ENCODE measurements at regions of chr22 and their contacts with region 1.

Region 1: DNA sequence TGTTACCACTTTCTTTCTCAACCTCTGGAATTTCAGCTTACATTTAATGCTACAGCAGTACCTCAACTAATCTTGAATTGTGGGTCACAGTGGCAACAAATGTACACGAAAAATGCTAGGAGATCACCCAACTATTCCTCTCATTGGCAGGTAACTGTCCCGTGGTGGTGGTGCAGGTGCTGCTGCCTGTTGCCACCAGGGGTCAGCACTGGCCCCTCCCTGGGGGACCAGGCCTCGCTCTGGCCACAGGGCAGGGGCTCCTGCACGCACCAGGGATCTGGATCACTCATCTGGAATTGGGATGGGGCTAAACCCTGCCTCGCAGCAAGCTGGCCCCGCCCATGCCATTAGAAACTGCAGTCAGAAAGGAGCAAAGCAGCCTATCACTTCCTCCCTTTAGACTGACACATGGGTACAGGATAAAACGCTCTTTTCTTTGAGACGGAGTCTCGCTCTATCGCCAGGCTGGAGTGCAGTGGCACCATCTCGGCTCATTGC is 6.9 kb upstream of the POLDIP3 start:
- DNase-seq: peak; percentile 69
- ATAC-seq: peak; percentile 80
- H3K4me3 Mint-ChIP-seq: no peak overlapping the region
- H3K27ac Mint-ChIP-seq: peak overlapping the region; percentile 30
- H3K4me1 Mint-ChIP-seq: peaks cover 33% of the 10 kb centered on the region
- H3K27me3 Mint-ChIP-seq: no peaks in the 10 kb centered on the region
- CTCF ChIP-seq: peak; percentile 46

Region 2: GRCh38 chr22:42635531-42635930 is 14.0 kb after region 1 on chr22:
- CTCF ChIA-PET with region 1: interaction called, 14 read pairs
- POLR2A ChIA-PET with region 1: no interaction called
- intact Hi-C with region 1: no loop called
- DNase-seq: no peak
- ATAC-seq: no peak
- H3K4me3 Mint-ChIP-seq: no peak overlapping the region
- H3K27ac Mint-ChIP-seq: no peak overlapping the region
- H3K4me1 Mint-ChIP-seq: peaks cover 9% of the 10 kb centered on the region
- H3K27me3 Mint-ChIP-seq: no peaks in the 10 kb centered on the region
- CTCF ChIP-seq: no peak

Region 3: GRCh38 chr22:42642806-42643633 is 21.5 kb after region 1 on chr22:
- CTCF ChIA-PET with region 1: interaction called, 14 read pairs
- POLR2A ChIA-PET with region 1: interaction called, 68 read pairs
- intact Hi-C with region 1: no loop called
- DNase-seq: no peak
- ATAC-seq: peak; percentile 84
- H3K4me3 Mint-ChIP-seq: no peak overlapping the region
- H3K27ac Mint-ChIP-seq: peak overlapping the region; percentile 74
- H3K4me1 Mint-ChIP-seq: peaks cover 67% of the 10 kb centered on the region
- H3K27me3 Mint-ChIP-seq: no peaks in the 10 kb centered on the region
- CTCF ChIP-seq: no peak

Region 4: DNA sequence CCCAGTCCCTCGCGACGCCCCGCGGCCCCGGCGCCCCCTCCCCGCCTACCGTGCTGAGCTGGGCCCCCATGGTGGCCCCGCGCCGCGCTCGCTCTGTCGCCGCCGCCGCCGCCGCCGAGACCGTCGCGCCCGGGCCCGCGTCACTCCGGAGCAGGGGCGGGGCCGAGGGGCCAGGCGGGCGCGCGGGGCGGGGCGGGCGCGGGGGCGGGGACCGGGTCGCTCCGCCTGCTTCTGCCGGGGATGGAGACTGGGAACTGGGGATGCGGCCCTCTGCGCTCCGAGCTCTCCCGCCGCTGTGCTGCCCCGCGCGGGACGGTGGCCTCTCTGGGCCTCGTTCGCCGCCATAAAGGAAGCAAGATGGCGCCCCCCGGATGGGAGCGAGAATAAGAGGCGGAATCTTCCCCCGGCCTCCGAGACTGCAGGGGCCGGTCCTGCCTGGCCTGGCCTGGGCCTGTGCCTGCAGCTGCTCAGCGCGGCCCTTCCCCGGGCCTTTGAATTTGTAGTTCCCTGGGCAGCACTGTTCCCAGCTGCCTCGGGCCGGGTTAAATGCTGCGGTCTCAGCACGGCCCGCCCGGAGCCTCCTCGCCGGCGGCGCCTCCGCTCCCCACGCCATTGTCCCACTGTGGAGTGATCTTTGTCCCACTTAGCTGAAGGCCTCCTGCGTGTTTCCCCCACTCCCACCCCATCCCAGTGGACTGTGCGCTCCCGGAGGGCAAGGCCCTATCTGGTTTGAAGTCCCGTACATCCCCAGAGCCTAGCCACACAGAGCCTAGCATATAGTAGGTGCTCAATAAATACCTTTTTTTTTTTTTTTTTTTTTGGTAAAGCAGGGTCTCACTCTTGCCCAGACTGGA is 27.9 kb after region 1 on chr22 and contains the start of gene CYB5R3:
- CTCF ChIA-PET with region 1: interaction called, 17 read pairs
- POLR2A ChIA-PET with region 1: interaction called, 96 read pairs
- intact Hi-C with region 1: no loop called
- DNase-seq: peak; percentile 81
- ATAC-seq: peak; percentile 77
- H3K4me3 Mint-ChIP-seq: peak within 1 kb of the TSS; percentile 92
- H3K27ac Mint-ChIP-seq: peak within 1 kb of the TSS; percentile 91
- H3K4me1 Mint-ChIP-seq: peaks cover 55% of the 10 kb centered on the region
- H3K27me3 Mint-ChIP-seq: no peaks in the 10 kb centered on the region
- CTCF ChIP-seq: no peak
- total RNA-seq, gene CYB5R3: 78.2 and 91.7 TPM in 2 replicates

Region 5: GRCh38 chr22:42655693-42656092 is 34.1 kb after region 1 on chr22:
- CTCF ChIA-PET with region 1: interaction called, 17 read pairs
- POLR2A ChIA-PET with region 1: interaction called, 96 read pairs
- intact Hi-C with region 1: no loop called
- DNase-seq: peak; percentile 54
- ATAC-seq: peak; percentile 93
- H3K4me3 Mint-ChIP-seq: peak overlapping the region; percentile 65
- H3K27ac Mint-ChIP-seq: peak overlapping the region; percentile 81
- H3K4me1 Mint-ChIP-seq: peaks cover 46% of the 10 kb centered on the region
- H3K27me3 Mint-ChIP-seq: no peaks in the 10 kb centered on the region
- CTCF ChIP-seq: no peak

Region 6: DNA sequence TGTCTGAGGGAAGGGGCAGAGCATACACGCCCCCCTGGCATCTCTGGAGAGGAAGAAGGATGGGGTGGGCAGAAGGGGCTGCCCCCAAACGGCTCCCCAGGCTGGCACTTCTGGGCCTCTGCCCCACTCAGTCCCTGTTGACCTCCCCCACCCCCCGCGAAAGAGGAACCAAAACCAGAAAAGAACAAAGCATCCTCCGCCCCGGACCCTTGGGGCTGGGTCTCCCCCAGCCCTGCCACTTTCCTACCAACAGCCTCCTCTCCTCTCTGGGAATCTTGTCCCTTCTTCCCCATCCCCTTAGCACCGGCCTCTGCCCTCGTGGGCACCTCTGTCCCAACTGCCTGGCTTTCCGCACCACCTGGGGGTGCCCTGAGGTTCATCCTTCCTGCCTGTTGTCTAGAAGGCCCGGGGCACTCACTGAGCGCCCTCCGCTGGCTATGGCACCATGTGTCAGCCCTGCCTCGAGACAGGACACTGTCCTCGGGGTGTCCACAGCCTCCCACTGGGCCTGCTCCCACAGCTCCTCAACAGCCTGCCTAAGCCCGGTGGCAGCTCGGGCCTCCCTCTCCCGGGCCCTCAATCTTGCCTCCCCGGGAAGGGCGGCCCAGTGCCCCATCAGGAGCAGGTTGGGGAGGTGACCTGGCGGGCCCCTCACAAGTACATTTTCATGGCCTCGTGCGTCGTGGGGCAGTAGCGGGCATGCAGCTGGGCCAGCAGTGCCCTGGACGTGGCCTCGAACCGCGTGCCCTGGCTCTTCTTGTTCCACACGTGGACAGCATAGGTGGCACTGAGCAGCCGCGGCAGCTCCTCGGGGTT is 70.9 kb after region 1 on chr22:
- CTCF ChIA-PET with region 1: no interaction called
- POLR2A ChIA-PET with region 1: no interaction called
- intact Hi-C with region 1: loop called (anchors 1 kb)
- DNase-seq: peak; percentile 45
- ATAC-seq: peak; percentile 87
- H3K4me3 Mint-ChIP-seq: peak overlapping the region; percentile 68
- H3K27ac Mint-ChIP-seq: peak overlapping the region; percentile 88
- H3K4me1 Mint-ChIP-seq: peaks cover 42% of the 10 kb centered on the region
- H3K27me3 Mint-ChIP-seq: no peaks in the 10 kb centered on the region
- CTCF ChIP-seq: no peak

Region 7: GRCh38 chr22:42768385-42769019 is 146.9 kb after region 1 on chr22:
- CTCF ChIA-PET with region 1: no interaction called
- POLR2A ChIA-PET with region 1: no interaction called
- intact Hi-C with region 1: no loop called
- DNase-seq: no peak
- ATAC-seq: no peak
- H3K4me3 Mint-ChIP-seq: no peak overlapping the region
- H3K27ac Mint-ChIP-seq: no peak overlapping the region
- H3K4me1 Mint-ChIP-seq: peaks cover 64% of the 10 kb centered on the region
- H3K27me3 Mint-ChIP-seq: no peaks in the 10 kb centered on the region
- CTCF ChIP-seq: no peak

Region 8: DNA sequence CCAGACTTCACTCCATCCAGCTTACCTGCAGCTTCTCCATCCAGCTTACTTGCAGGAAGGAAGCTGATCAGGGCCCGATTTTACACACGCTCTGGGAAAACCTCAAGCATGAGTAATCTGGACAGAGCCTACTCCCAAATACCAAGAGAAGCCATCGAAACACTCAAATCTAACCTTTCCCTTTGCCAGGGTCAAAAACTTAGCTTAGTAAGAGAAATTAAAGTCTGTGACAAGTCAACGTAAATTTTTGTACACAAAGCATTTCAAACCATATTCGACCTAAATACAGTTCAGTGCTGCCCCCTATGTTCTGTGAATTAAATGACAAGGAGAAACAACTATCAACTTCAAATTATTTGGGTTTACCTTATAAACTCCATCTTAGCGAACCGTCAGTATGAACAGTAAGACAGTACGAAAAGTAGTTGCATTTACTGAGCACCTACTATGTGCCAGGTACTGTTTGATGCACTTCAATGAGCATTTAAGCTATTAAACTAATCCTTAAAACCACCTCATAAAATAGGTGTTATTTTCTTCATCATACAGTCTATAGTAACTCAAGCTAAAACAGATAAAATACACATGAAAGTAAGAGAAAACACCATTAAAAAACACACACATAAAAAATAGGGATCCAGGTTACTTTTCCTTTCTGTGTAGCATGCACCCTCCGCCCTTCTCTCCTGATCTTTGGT is 198.7 kb after region 1 on chr22:
- CTCF ChIA-PET with region 1: interaction called, 32 read pairs
- POLR2A ChIA-PET with region 1: interaction called, 3 read pairs
- intact Hi-C with region 1: loop called (anchors 1 kb)
- DNase-seq: no peak
- ATAC-seq: no peak
- H3K4me3 Mint-ChIP-seq: no peak overlapping the region
- H3K27ac Mint-ChIP-seq: no peak overlapping the region
- H3K4me1 Mint-ChIP-seq: peaks cover 3% of the 10 kb centered on the region
- H3K27me3 Mint-ChIP-seq: no peaks in the 10 kb centered on the region
- CTCF ChIP-seq: no peak